Right ventricle myocardium inferior (tissue), 1 donor: ENCODE measurements at regions of chr4 and their contacts with region 1.

Region 1: DNA sequence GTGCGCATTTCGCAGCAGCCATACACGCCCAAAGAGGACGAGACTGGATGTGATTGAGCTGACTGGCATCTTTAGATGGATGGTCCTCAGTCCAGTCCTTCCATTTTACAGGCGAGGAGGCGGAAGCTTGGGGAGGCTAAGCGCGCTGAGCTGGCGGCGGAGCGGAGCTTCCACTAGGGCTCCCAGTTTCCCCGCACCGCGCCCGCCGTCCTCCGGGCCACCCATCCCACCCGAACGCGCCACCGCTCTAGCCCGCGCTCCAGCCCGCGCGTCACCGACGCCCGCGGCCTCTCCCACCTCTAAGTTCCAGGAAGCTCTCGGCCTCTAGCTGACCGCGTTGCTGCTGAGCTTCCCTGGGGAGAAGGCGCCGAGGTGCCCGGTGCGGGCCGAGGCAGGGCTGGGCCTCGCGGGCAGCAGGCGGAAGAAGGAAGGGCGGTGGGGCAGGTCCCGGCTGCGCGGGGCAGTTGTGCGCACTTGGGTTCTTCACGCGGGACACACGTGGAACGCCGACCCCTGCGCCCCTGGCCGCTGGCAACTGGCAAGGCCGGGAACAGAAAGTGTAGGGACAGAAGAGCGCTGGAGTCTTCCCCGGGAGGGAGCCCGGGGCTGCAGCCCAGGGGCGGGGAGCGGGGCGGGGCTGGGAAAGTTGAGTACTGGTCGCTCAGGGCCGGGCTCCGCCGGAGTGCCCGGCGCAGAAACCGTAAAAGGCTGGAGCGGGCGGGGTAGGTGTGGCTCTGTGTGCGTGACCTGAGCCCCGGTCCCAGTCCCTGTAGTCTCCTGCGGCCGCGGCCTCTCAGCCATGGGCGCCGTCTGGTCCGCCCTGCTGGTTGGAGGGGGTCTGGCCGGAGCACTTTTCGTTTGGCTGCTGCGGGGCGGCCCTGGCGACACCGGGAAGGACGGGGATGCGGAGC is at the start of gene STBD1:
- DNase-seq: peak; percentile 90
- ATAC-seq: peak; percentile 90
- total RNA-seq, gene STBD1: 29.4 TPM

Region 2: DNA sequence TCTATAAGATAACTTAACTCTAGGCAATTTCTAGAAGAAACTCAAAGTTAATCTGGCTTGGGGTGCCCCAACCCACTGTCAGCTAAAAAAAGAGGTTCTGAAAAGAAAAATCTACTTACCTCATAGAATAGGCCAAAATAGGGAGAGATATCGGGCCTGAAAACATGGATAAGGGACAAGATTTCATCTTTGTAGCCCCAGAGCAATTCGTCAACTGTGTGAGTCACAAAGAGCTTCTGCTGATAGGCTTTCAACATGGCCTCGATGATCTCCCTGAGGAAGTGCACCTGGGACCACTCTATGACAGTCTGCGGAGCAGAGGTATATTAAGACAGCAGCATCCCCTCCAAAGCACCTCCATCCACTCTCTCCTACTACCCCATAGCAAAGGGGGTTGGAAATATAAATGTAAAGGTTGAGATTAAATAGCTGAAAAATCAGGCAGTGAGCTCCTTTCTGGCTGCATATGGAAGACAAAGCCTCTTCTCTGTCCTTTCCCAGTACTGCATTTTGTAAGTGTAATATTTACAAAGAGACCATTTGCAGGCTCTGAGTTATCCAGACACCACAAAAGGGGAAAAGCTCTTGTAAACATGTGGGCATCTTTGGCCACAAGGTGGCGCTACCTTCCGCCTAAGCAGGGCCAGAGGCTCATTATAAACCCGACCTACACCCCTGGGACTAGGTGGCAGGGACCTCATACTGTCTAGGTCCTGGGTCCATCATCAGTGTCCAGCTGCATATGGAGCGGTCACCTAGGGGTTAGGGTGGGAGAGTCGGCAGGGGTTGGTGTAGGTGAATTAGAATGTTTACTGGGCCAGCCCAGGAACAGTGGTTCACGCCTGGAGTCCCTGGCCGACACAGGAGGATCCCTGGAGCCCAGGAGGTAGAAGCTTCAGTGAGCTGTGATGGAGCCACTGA is 126.6 kb before region 1 on chr4:
- intact Hi-C with region 1: loop called (anchors 2 kb)
- DNase-seq: peak; percentile 90
- ATAC-seq: peak; percentile 82

Region 3: DNA sequence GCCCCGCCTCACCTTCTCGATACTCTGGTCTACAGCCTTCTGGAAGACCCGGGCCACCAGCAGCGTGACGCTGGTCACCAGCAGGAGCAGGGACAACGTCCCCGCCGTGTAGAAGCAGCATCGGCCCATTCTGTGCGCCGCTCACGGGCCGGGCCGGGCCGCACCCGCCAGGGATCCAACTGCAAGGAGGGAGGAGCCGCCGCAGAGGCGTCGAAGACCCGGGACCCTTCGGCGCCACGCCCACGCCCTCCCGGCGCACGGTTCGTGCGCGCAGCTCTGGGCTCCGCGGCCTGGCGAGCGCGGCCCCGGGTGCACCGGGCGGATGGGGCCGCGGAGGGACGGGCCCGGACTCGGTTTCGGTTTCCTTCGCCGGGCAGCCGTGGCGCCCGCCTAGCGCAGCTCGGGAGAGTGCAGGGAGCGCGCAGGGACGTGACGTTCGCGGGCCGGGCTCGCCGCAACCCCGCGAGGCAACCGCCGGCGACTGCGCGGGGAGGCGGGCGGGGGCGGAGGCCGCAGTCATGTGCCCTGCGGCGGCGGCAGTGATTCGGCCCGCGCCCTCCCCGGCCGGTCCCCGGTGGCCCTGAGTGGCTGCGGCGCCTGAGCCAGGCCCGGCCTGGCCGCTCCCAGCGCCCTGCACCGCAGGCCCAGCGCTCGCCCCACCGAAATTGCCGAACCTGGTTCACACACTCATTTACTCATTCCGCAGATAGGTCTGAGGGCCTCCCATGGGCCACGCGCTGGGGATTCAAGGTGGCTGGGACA is 92.6 kb before region 1 on chr4 and contains the start of gene SCARB2:
- intact Hi-C with region 1: loop called (anchors 5 kb)
- DNase-seq: peak; percentile 95
- ATAC-seq: peak; percentile 97
- total RNA-seq, gene SCARB2: 102 TPM

Region 4: GRCh38 chr4:76251441-76252270 is 54.6 kb before region 1 on chr4 and contains the start of gene FAM47E:
- intact Hi-C with region 1: loop called (anchors 2 kb)
- DNase-seq: peak; percentile 90
- ATAC-seq: peak; percentile 97
- total RNA-seq, gene FAM47E: 2.4 TPM

Region 5: DNA sequence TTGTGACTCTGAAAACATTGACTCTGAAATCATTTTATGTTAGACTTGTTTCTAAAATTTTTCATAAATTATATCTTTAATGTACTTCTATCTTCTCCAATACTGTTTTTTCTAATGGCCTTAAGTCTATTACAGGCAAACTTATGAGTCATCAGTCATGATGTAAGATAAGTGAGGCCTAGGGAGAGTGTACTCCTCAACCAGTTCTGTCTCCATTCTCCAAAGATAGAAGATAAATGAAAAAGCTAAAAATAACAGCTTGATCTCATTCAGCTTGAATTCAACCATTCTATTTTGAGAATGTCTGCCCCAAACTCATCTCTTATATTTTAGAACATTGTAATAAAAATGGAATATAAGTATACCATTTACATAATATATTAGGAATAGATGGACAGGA is 34.8 kb after region 1 on chr4:
- intact Hi-C with region 1: loop called (anchors 2 kb)
- DNase-seq: no peak
- ATAC-seq: peak; percentile 20

Region 6: DNA sequence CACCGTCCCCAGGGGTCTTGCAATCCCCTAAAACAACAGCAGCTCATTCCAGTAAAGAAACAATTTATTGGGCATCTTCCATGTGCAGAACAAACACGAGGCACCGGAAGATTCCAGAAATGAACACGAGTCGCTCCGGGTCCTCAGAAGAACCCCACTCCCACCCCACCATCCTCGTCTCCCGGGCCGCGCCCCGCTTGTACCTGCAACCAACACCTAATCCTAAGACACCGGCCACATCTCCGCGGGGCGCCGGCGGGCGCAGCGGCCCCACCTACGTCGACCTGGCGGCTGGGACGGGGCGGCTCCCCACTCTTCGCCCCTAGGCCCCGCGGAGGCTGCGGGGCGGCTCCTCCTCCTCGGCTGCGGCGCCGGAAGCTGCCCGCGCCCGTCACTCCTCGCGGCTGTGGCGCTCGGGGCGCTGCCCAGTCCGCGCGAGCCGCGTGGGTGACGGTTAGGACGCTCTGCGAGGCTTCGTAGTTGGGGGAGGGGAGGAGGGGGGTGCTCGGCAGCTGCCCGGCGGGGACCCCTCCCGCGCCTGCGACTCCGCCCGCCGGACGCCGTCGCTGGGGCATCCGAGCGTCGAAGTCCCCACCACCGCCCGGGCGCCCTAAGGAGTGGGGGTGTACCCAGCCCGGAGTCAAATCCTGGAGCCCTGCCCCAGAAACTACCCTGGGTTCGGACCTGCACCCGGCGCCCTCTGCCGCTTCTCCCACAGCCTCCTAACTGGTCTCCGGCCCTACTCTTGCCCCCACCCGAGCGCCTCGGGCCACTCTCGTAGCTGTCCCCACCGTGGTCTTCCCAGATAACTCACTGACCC is 114.7 kb after region 1 on chr4 and contains the start of gene CCDC158:
- intact Hi-C with region 1: loop called (anchors 10 kb)
- DNase-seq: peak; percentile 63
- ATAC-seq: peak; percentile 86
- total RNA-seq, gene CCDC158: 0.16 TPM